GM23248 (cell line): ENCODE measurements at regions of chr7 and their contacts with region 1.

Region 1: DNA sequence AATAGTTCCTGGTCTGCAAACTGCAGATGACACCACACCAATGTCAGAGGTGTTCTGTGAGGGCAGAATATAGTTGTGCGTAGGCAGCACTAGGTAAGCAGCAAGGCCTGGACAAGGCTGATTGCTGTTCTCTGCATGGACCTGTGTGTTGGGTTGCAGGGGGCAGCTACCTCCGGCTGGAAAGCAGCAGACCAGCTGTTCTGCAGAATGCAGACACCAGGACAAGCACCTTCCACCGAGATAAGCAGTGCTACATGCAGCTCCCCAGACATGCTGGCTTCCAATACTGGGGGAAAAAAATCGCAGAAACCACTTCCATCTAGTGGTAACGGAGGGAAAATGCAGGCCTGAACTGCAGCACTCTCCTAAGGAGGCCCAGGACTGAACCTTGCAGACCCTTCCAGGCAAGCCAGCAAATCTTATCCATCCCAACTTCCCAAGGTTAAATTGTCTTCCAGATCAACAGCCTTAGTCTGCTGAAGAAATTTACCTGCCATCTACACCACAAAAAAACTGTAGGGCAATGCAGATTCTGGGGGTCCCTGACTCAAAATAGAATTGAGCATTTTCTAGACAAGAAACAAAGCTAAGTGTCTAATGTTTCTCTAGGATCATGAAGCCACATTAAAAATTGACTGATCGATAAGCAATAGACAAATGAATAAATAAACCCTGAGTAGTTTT is 50.5 kb upstream of the COBL start:
- DNase-seq: peak; percentile 69
- H3K4me3 ChIP-seq: no peak overlapping the region
- H3K27ac ChIP-seq: no peak overlapping the region
- H3K4me1 ChIP-seq: no peaks in the 10 kb centered on the region
- H3K27me3 ChIP-seq: no peaks in the 10 kb centered on the region

Region 2: DNA sequence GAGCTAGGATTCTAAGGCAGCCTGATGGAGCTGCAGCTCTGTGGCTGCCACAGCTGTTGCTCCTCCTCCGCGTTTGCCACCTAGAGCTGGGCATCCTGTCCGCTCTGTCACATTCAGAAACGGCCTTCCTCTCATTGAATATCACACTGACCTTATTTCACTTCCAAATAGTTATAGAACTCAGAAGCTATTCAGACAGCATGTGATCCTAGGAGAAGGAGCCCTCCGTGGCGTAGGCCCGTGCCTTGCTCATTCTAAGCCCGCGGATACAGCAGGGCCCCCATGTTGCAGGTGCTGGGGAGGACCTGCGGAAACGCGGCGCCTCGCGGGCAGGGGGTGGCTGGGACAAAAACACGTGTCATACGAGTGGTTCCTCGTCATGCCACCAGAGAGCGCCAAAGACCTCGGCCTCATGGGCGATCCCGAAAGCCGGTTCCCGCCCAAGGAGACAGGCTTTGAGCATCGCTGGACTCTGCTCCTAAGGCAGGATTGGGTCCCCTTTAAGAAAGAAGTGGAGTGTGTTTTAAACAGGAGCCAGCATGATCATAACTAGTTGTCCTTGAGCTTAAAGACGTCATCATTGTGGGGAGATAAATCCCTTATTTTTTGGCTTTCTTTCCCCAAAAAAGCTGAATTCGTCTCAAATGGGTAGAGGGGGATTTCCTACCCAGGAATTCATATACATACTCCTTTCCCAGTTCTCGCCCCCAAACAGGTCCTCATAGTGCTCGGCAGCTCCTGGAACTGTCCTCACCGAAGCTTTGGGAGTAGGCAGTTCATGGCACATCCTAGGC is 899.1 kb before region 1 on chr7:
- in situ Hi-C with region 1: loop called (anchors 25 kb)
- DNase-seq: peak; percentile 83
- H3K4me3 ChIP-seq: 0 out of 2 replicates have a peak overlapping the region, but pooled peaks have one; percentile 34
- H3K27ac ChIP-seq: no peak overlapping the region
- H3K4me1 ChIP-seq: no peaks in the 10 kb centered on the region
- H3K27me3 ChIP-seq: peaks cover 4% of the 10 kb centered on the region; the same call in 1 of the 2 replicates

Region 3: GRCh38 chr7:50838675-50839377 is 528.2 kb before region 1 on chr7:
- in situ Hi-C with region 1: no loop called
- DNase-seq: peak; percentile 93
- H3K4me3 ChIP-seq: no peak overlapping the region
- H3K27ac ChIP-seq: peak overlapping the region; percentile 65
- H3K4me1 ChIP-seq: peaks cover 24% of the 10 kb centered on the region
- H3K27me3 ChIP-seq: no peaks in the 10 kb centered on the region

Region 4: DNA sequence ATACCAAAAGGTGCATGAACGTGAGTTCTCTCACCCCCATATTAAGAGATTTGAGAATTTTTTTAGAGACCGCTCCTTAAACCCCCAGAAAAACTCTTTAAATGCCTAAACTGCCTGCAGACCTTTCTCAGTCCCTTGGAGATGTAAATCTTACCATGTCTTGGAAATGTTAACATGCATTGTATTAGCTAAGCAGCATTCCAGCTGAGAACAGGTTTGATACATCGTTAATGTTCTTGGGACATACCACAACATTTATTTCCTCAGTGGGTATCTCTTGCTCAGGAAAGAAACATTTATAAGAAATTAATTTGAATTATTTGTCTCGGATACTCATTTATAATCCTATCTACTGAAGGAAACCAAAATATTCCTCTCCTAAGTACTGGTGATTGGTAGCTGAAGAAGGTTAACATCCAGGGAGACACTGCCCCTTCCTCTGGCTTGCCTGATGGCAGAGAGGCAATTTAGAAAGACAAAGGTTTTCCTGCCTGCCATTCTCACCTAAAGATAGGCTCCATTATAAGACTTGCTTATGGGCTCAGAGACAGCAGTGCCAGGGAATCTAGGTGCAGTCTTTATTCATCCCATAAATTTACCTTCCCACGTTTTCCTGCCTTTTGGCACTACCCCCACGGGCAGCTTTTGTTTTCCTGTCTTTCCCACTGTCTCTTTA is 191.6 kb before region 1 on chr7:
- in situ Hi-C with region 1: loop called (anchors 10 kb)
- DNase-seq: no peak
- H3K4me3 ChIP-seq: no peak overlapping the region
- H3K27ac ChIP-seq: no peak overlapping the region
- H3K4me1 ChIP-seq: no peaks in the 10 kb centered on the region
- H3K27me3 ChIP-seq: peaks cover 26% of the 10 kb centered on the region